Sigmoid colon (tissue), 7 donors: ENCODE measurements at regions of chr5 and their contacts with region 1.

Region 1: GRCh38 chr5:217860-218456 is at the starts of genes CCDC127 and SDHA:
- DNase-seq: peak; percentile 98
- H3K4me3 ChIP-seq: peak within 1 kb of the TSS; percentile 90 to 100 (median 99)
- H3K27ac ChIP-seq: peak within 1 kb of the TSS; percentile 89 to 92 (median 91)
- H3K4me1 ChIP-seq: peaks cover 0 to 38% (median 35%) of the 10 kb centered on the region in 4 donors
- H3K27me3 ChIP-seq: no peaks in the 10 kb centered on the region
- CTCF ChIP-seq: peak in 2 of 4 experiments; percentile 20 to 23
- EP300 ChIP-seq: peak in 1 of 4 donors; percentile 71
- POLR2A ChIP-seq: peak; percentile 74 to 75
- total RNA-seq, gene CCDC127: 5.7 to 8.3 (median 7.1) TPM
- total RNA-seq, gene SDHA: 72.7 to 87.0 (median 80.2) TPM

Region 2: DNA sequence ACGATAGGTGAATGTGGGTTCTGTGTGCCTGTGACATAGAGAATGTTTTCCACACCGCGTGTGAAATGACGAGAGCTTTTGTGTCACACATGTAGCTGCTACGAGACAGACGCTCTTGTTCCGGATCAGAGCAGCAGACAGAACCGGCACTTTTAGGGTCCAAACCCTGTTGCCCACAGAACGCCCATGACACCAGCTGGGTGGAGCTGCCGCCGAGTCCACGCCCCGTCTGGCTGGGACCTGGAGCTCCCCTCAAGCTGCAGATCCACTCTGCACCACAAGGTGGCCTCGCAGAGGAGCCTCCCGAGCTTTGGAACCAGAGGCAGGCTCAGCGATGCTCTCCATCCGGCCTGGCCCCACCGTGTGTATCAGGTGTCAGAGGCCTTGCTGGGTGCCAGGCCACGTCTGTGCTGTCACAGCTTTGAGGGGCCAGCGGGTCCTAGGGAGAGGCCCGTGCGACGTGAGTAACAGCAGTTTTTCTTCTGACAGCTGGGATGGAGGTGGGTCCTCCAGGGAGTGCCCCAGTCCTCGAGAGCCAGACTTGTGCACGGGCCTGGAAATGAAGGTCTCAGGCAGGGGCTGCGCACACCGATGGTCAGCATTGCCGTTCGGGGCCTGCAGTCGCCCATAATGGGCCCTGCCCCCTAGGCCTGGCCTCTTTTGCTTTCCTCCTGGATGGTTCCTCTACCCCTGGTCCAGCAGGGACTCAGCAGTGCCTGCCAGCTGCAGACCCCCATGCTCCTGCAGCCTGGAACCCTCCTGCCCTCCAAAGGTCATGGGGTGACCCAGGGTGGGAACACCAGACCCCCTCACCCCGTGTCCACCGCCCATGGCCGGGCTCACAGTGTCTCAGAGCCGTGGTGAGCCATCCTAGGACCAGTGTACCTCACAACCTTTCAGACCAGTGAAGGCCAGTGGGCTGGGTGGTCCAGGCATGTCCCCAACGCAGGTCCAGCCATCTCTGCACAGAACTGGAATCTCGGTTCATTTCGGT is 29.2 kb before region 1 on chr5:
- intact Hi-C with region 1: loop called (anchors 1 kb)
- DNase-seq: peak; percentile 94
- H3K4me3 ChIP-seq: peak overlapping the region in 3 of 4 donors; percentile 21 to 34 (median 32)
- H3K27ac ChIP-seq: no peak overlapping the region
- H3K4me1 ChIP-seq: peaks cover 0 to 49% (median 44%) of the 10 kb centered on the region in 4 donors
- H3K27me3 ChIP-seq: peaks cover 0 to 14% (median 0%) of the 10 kb centered on the region in 3 donors
- CTCF ChIP-seq: peak; percentile 90 to 97 (median 94)
- EP300 ChIP-seq: no peak
- POLR2A ChIP-seq: no peak

Region 3: GRCh38 chr5:270340-270739 is 52.4 kb after region 1 on chr5:
- intact Hi-C with region 1: loop called (anchors 2 kb)
- DNase-seq: no peak
- H3K4me3 ChIP-seq: peak overlapping the region in 1 of 4 donors; percentile 100
- H3K27ac ChIP-seq: peak overlapping the region; percentile 81 to 95 (median 90)
- H3K4me1 ChIP-seq: peaks cover 0 to 24% (median 11%) of the 10 kb centered on the region in 4 donors
- H3K27me3 ChIP-seq: no peaks in the 10 kb centered on the region
- CTCF ChIP-seq: no peak
- EP300 ChIP-seq: no peak
- POLR2A ChIP-seq: no peak